Caco-2 (cell line): ENCODE measurements at regions of chr4 and their contacts with region 1.

Region 1: DNA sequence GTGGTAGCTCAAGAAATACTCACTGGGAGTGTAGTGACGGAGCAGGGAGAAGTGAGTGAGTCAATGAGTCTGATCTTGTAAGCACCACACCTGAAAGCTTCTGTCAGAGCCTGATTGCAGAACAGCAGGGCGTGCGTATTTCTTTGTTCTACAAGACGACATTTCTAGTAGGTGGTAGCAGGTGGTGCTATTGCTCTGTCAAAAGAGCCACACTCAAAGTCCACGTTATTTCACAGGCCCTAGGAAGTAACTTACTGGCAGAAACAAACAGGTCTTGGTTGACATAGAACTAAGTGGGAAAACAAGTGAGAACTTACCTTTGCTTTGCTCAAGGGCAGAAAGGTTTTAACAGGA is 46.4 kb upstream of the SPRY1 start:
- DNase-seq: peak; percentile 73 to 80
- H3K4me3 ChIP-seq: no peak overlapping the region
- H3K4me3 Mint-ChIP-seq: peak overlapping the region; percentile 36
- H3K27ac Mint-ChIP-seq: peak overlapping the region; percentile 81
- H3K4me1 ChIP-seq: peaks cover 28% of the 10 kb centered on the region
- H3K4me1 Mint-ChIP-seq: peaks cover 34% of the 10 kb centered on the region
- H3K27me3 ChIP-seq: no peaks in the 10 kb centered on the region
- H3K27me3 Mint-ChIP-seq: no peaks in the 10 kb centered on the region
- CTCF ChIP-seq: peak in 1 of 2 experiments; percentile 44

Region 2: GRCh38 chr4:123278755-123279154 is 71.4 kb before region 1 on chr4:
- CTCF ChIA-PET with region 1: no interaction called
- POLR2A ChIA-PET with region 1: no interaction called
- intact Hi-C with region 1: no loop called
- DNase-seq: no peak
- H3K4me3 ChIP-seq: no peak overlapping the region
- H3K4me3 Mint-ChIP-seq: no peak overlapping the region
- H3K27ac Mint-ChIP-seq: no peak overlapping the region
- H3K4me1 ChIP-seq: no peaks in the 10 kb centered on the region
- H3K4me1 Mint-ChIP-seq: no peaks in the 10 kb centered on the region
- H3K27me3 ChIP-seq: no peaks in the 10 kb centered on the region
- H3K27me3 Mint-ChIP-seq: no peaks in the 10 kb centered on the region
- CTCF ChIP-seq: no peak

Region 3: GRCh38 chr4:123301923-123302322 is 48.2 kb before region 1 on chr4:
- CTCF ChIA-PET with region 1: no interaction called
- POLR2A ChIA-PET with region 1: no interaction called
- intact Hi-C with region 1: loop called (anchors 1 kb)
- DNase-seq: no peak
- H3K4me3 ChIP-seq: no peak overlapping the region
- H3K4me3 Mint-ChIP-seq: no peak overlapping the region
- H3K27ac Mint-ChIP-seq: peak overlapping the region; percentile 44
- H3K4me1 ChIP-seq: peaks cover 32% of the 10 kb centered on the region
- H3K4me1 Mint-ChIP-seq: peaks cover 30% of the 10 kb centered on the region
- H3K27me3 ChIP-seq: no peaks in the 10 kb centered on the region
- H3K27me3 Mint-ChIP-seq: no peaks in the 10 kb centered on the region
- CTCF ChIP-seq: no peak

Region 4: GRCh38 chr4:123505095-123506010 is 155.2 kb after region 1 on chr4:
- CTCF ChIA-PET with region 1: no interaction called
- POLR2A ChIA-PET with region 1: no interaction called
- intact Hi-C with region 1: loop called (anchors 1 kb)
- DNase-seq: peak; percentile 76 to 80
- H3K4me3 ChIP-seq: peak overlapping the region; percentile 40
- H3K4me3 Mint-ChIP-seq: peak overlapping the region; percentile 79
- H3K27ac Mint-ChIP-seq: peak overlapping the region; percentile 91
- H3K4me1 ChIP-seq: peaks cover 30% of the 10 kb centered on the region
- H3K4me1 Mint-ChIP-seq: peaks cover 13% of the 10 kb centered on the region
- H3K27me3 ChIP-seq: no peaks in the 10 kb centered on the region
- H3K27me3 Mint-ChIP-seq: no peaks in the 10 kb centered on the region
- CTCF ChIP-seq: no peak

Region 5: DNA sequence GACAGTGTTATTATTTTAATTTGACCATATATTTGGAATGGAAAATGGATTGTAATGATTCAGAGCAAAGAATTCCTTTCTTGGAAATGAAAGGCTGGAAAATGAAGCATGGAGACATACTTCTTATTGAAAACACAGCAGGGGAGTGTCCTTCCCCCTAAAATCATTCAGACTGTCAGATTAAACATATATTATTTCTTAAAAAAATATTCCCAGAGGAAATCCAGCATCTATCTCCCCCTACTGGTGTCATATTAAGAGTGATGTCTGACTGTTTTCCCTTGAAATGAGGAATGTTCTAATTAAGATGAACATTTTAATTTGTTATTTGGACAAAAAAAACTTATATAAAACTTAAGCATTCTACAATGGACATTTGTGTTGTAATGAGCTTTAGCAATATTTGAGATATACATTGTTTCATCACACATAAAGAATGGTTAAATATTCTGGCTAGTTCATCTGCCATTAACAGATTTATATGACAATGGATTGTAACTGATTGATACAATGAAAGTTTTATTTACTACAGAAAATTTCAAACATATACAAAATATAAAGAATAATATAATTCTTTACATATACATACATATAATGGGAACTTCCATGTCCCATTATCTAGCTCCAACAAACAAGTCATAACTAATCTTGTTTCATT is 311.0 kb after region 1 on chr4:
- CTCF ChIA-PET with region 1: interaction called, 6 read pairs
- POLR2A ChIA-PET with region 1: no interaction called
- intact Hi-C with region 1: loop called (anchors 1 kb)
- DNase-seq: no peak
- H3K4me3 ChIP-seq: no peak overlapping the region
- H3K4me3 Mint-ChIP-seq: no peak overlapping the region
- H3K27ac Mint-ChIP-seq: no peak overlapping the region
- H3K4me1 ChIP-seq: peaks cover 6% of the 10 kb centered on the region; the same call in 1 of the 2 replicates
- H3K4me1 Mint-ChIP-seq: peaks cover 20% of the 10 kb centered on the region
- H3K27me3 ChIP-seq: no peaks in the 10 kb centered on the region
- H3K27me3 Mint-ChIP-seq: no peaks in the 10 kb centered on the region
- CTCF ChIP-seq: peak; percentile 41 to 54

Region 6: DNA sequence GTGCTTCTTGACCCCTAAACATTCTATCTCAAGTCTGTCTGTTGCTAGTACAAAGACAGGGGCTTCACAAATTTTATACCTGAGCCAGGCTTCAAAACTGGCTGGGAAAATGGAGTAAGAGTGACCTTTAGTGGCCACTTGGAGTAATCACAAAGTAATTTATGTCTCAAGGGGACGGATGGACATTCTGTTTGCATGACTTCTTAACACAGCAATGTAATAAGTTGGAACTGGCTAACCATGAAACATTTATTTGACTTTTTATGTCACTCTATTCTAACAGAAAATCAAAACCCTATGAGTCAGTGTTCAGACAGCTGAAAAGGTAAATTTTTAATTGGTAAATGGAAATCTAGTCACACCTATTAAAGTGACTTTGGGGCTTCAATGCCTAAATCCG is 761.8 kb after region 1 on chr4:
- CTCF ChIA-PET with region 1: no interaction called
- POLR2A ChIA-PET with region 1: no interaction called
- intact Hi-C with region 1: loop called (anchors 1 kb)
- DNase-seq: peak in 1 of 2 experiments; percentile 46
- H3K4me3 ChIP-seq: no peak overlapping the region
- H3K4me3 Mint-ChIP-seq: no peak overlapping the region
- H3K27ac Mint-ChIP-seq: no peak overlapping the region
- H3K4me1 ChIP-seq: no peaks in the 10 kb centered on the region
- H3K4me1 Mint-ChIP-seq: no peaks in the 10 kb centered on the region
- H3K27me3 ChIP-seq: no peaks in the 10 kb centered on the region
- H3K27me3 Mint-ChIP-seq: peaks cover 3% of the 10 kb centered on the region
- CTCF ChIP-seq: peak; percentile 45 to 50